ENCODE measurements at regions of chr7 and their contacts with region 1.

Region 1: GRCh38 chr7:96414931-96415292 is 93.0 kb upstream of the SLC25A13 start:
- DNase-seq: peak; percentile 30
- ATAC-seq: peak; percentile 73
- H3K4me3 ChIP-seq: no peak overlapping the region
- H3K27ac ChIP-seq: no peak overlapping the region
- H3K4me1 ChIP-seq: no peaks in the 10 kb centered on the region
- H3K27me3 ChIP-seq: no peaks in the 10 kb centered on the region
- CTCF ChIP-seq: peak; percentile 61
- POLR2A ChIP-seq: no peak
- RAD21 ChIP-seq: peak; percentile 60

Region 2: DNA sequence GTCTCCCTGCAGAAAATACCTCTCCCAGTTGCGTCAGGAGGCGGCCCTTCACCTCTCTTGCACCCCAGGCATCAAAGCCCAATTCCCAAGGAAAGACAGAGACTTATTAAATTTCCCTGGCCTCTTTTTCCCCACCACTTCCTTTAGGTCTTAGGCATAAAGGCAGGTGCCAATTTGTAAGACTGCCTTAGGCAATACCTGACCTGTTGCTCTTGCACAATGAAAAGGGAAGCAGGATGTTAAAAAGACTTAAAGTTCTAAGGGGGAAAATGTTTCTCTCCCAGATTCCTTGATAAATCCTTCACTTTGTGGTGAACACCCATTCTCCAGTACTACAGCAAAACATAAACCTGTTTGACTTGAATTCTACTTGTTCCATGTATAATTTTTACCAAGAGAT is 279.6 kb before region 1 on chr7:
- CTCF ChIA-PET with region 1: no interaction called
- POLR2A ChIA-PET with region 1: no interaction called
- dilution Hi-C with region 1: no loop called
- in situ Hi-C with region 1: no loop called
- intact Hi-C with region 1: no loop called
- DNase-seq: no peak
- ATAC-seq: no peak
- H3K4me3 ChIP-seq: no peak overlapping the region
- H3K27ac ChIP-seq: no peak overlapping the region
- H3K4me1 ChIP-seq: no peaks in the 10 kb centered on the region
- H3K27me3 ChIP-seq: no peaks in the 10 kb centered on the region
- CTCF ChIP-seq: no peak
- POLR2A ChIP-seq: no peak
- RAD21 ChIP-seq: no peak

Region 3: GRCh38 chr7:96188174-96188581 is 226.7 kb before region 1 on chr7:
- CTCF ChIA-PET with region 1: no interaction called
- POLR2A ChIA-PET with region 1: no interaction called
- dilution Hi-C with region 1: no loop called
- in situ Hi-C with region 1: no loop called
- intact Hi-C with region 1: loop called (anchors 10 kb)
- DNase-seq: no peak
- ATAC-seq: peak; percentile 60
- H3K4me3 ChIP-seq: no peak overlapping the region
- H3K27ac ChIP-seq: no peak overlapping the region
- H3K4me1 ChIP-seq: no peaks in the 10 kb centered on the region
- H3K27me3 ChIP-seq: no peaks in the 10 kb centered on the region
- CTCF ChIP-seq: no peak
- POLR2A ChIP-seq: no peak
- RAD21 ChIP-seq: no peak

Region 4: DNA sequence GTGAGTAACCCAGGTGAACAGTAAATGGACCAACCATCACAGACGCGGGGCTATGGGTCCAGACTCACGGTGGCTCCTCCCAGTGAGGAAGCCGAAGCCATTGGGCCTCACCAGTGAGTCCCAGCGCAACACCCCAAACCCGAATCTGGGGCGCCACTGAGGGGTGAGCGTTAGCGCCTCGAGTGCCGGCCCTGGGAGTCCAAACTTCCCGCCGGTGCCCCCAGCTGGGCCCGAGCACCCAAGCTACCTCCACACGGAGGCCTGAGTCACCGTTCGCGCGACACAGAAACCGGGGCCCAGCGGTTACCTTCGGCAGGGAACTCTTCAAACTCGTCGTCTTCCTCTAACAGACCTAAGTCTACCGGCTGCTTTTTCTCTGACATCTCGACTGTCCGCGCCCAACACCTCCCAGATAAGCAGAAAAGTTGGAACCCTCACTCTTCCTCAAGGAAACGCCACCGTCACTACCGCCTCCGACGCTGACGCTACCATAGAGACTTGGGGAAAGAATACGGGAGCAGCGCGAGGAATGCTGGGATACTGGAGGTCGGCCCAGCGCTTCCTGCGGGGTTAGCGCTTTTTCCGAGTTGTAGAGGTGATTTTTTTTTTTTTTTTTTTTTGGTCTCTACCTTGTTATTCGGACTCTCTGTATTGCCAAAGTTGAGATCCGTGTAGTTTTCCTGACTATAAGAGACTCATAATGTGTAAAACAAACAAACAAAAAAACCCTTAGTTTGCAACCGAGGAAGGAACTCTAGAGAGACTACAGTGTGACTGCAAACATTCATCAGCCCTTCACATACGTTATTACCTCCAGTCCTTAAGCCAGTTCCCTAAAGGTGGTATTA is 294.7 kb after region 1 on chr7 and contains the start of gene SEM1:
- CTCF ChIA-PET with region 1: no interaction called
- POLR2A ChIA-PET with region 1: interaction called, 15 read pairs
- dilution Hi-C with region 1: no loop called
- in situ Hi-C with region 1: no loop called
- intact Hi-C with region 1: no loop called
- DNase-seq: peak; percentile 84
- ATAC-seq: peak; percentile 99
- H3K4me3 ChIP-seq: peak within 1 kb of the TSS; percentile 77
- H3K27ac ChIP-seq: peak within 1 kb of the TSS; percentile 81
- H3K4me1 ChIP-seq: peaks cover 1% of the 10 kb centered on the region; the same call in 1 of the 2 replicates
- H3K27me3 ChIP-seq: no peaks in the 10 kb centered on the region
- CTCF ChIP-seq: no peak
- POLR2A ChIP-seq: peak; percentile 93
- RAD21 ChIP-seq: no peak
- total RNA-seq, gene SEM1: 17.2 and 23.6 TPM in 2 replicates

Measured in IMR-90 (cell line).